ENCODE measurements at regions of chr19 and their contacts with region 1.

Region 1: GRCh38 chr19:58581227-58582151 is 8.4 kb upstream of the MZF1 start:
- DNase-seq: peak; percentile 97
- H3K4me3 Mint-ChIP-seq: no peak overlapping the region
- H3K27ac Mint-ChIP-seq: peak overlapping the region; percentile 77
- H3K4me1 Mint-ChIP-seq: peaks cover 29% of the 10 kb centered on the region
- H3K27me3 Mint-ChIP-seq: no peaks in the 10 kb centered on the region

Region 2: GRCh38 chr19:58513694-58514563 is 67.6 kb before region 1 on chr19:
- intact Hi-C with region 1: loop called (anchors 1 kb)
- DNase-seq: peak; percentile 99
- H3K4me3 Mint-ChIP-seq: peak overlapping the region; percentile 91
- H3K27ac Mint-ChIP-seq: peak overlapping the region; percentile 93
- H3K4me1 Mint-ChIP-seq: peaks cover 32% of the 10 kb centered on the region
- H3K27me3 Mint-ChIP-seq: no peaks in the 10 kb centered on the region

Region 3: DNA sequence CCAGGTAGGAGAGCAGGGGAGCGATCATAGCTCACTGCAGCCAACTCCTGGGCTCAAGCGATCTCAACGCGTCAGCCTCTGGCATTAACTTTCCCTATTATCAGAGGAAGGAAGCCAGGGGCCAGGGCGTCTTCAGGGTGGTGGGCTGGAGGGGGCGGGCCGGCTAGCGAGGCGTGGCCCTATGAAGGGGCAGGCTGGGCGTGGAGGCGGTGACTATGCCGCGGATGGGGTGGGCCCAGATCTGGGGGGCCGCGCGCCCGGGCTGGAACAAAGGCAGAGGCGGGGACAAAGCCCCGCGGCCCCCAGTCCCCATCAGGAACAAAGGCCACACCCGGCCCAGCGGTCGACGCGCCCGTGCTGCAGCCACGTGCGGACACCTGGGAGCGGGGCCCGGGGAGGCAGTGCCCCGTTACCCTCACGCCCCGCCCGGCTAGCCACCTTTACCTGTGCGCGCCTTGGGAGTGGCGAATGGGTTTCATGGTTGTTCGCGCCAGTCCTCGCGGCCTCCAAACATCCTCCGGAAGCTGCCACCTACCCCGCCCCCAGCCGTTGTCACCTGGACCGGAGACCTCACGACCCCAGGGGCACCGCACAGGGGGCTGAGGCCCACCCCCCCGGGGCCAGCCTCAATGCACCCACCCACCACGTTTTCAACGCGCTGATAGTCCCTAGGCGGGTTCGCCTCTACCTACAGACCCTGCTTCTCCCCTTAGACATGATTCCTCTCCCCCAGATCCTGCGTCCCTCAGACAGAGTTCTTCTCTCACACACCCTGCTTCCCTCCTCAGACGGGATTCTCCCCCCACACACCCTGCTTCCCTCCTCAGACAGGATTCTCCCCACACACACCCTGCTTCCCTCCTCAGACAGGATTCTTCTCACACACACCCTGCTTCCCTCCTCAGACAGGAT is 43.0 kb before region 1 on chr19:
- intact Hi-C with region 1: no loop called
- DNase-seq: peak; percentile 81
- H3K4me3 Mint-ChIP-seq: peak overlapping the region; percentile 79
- H3K27ac Mint-ChIP-seq: peak overlapping the region; percentile 41
- H3K4me1 Mint-ChIP-seq: peaks cover 13% of the 10 kb centered on the region
- H3K27me3 Mint-ChIP-seq: peaks cover 20% of the 10 kb centered on the region